MCF 10A (cell line): ENCODE measurements at regions of chr11 and their contacts with region 1.

Region 1: GRCh38 chr11:36300651-36301050 is 4.6 kb downstream of the PRR5L start:
- DNase-seq: peak; percentile 86
- H3K4me3 Mint-ChIP-seq: peak overlapping the region; percentile 43
- H3K27ac Mint-ChIP-seq: peak overlapping the region; percentile 17
- H3K4me1 Mint-ChIP-seq: peaks cover 40% of the 10 kb centered on the region
- H3K27me3 Mint-ChIP-seq: no peaks in the 10 kb centered on the region
- CTCF ChIP-seq: no peak

Region 2: GRCh38 chr11:36289226-36289852 is 11.3 kb before region 1 on chr11 and contains the start of gene COMMD9:
- CTCF ChIA-PET with region 1: interaction called, 10 read pairs
- POLR2A ChIA-PET with region 1: interaction called, 11 read pairs
- intact Hi-C with region 1: no loop called
- DNase-seq: peak; percentile 90
- H3K4me3 Mint-ChIP-seq: peak within 1 kb of the TSS; percentile 84
- H3K27ac Mint-ChIP-seq: peak within 1 kb of the TSS; percentile 91
- H3K4me1 Mint-ChIP-seq: peaks cover 28% of the 10 kb centered on the region
- H3K27me3 Mint-ChIP-seq: no peaks in the 10 kb centered on the region
- CTCF ChIP-seq: no peak
- total RNA-seq, gene COMMD9: 38.7 and 39.8 TPM in 2 replicates

Region 3: DNA sequence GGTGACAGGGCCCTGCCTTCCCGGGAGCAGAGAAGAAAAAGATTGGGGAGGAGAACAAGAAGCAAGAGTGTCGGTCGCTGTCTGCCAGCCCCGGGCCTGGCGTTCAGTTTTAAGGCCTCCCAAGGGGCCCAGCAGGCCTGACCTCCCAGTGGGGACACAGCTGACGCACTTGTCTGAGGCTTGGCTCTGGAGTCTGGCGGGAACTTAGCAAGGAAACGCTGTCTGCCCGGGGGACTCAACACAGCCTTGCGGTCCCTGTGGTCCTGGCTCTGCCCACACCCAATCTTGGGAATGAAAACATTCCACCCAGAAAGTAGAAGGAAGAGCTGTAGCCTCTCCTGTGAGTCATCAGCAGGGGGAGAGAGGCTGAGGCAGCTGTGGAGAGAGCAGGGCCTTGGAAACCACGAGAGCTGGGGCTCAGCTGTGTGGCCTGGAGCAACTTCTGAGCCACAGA is 155.0 kb after region 1 on chr11:
- CTCF ChIA-PET with region 1: no interaction called
- POLR2A ChIA-PET with region 1: no interaction called
- intact Hi-C with region 1: no loop called
- DNase-seq: peak; percentile 92
- H3K4me3 Mint-ChIP-seq: no peak overlapping the region
- H3K27ac Mint-ChIP-seq: peak overlapping the region; percentile 95
- H3K4me1 Mint-ChIP-seq: peaks cover 23% of the 10 kb centered on the region
- H3K27me3 Mint-ChIP-seq: no peaks in the 10 kb centered on the region
- CTCF ChIP-seq: no peak